IMR-90 (cell line): ENCODE measurements at regions of chr16 and their contacts with region 1.

Region 1: DNA sequence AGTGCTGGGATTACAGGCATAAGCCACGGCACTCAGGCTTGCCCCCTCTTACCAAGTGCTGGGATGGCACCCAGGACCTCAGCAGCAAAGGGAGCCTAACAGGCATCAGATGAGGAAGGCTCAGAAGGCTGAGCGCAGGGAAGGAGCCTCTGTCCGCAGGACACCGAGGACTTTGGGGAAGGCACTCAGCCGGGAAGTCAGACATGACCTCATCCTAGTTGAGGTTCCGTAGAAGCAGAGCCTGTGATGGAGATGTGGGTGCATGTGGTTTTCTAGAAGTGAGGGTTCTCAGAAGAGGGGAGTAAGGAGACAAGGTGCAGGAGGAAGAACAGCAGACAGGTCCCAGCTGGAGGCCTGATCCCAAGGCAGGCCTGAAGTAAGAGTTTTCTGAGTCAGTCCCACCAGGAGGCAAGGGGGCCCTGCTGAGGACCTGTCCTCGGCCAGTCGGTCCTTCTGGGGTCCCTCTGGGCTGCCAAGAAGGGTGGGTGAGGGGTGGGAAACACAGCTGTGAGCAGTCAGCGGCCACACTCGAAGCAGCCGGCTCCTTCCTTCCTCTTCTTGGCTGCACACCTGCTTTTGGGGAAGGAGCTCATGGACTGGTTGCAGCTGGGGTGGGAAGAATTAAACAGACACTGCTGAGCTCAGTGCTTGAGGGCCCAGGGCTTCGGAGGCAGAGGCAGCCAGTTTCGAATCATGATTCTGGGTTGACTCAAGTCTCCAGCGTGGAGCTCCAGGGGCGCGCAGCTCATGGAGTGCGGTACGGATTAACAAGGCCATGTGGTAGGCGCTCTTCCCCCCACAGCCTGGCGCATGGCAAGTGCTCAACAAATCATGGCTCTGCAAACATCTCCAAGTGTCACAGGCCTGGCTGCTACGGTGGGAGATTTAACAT is 38.9 kb upstream of the SNN start:
- DNase-seq: peak; percentile 41
- ATAC-seq: no peak
- H3K4me3 ChIP-seq: no peak overlapping the region
- H3K27ac ChIP-seq: peak overlapping the region; percentile 59; the same call in 1 of the 2 replicates
- H3K4me1 ChIP-seq: peaks cover 34% of the 10 kb centered on the region
- H3K27me3 ChIP-seq: no peaks in the 10 kb centered on the region
- CTCF ChIP-seq: no peak
- POLR2A ChIP-seq: no peak
- RAD21 ChIP-seq: no peak

Region 2: DNA sequence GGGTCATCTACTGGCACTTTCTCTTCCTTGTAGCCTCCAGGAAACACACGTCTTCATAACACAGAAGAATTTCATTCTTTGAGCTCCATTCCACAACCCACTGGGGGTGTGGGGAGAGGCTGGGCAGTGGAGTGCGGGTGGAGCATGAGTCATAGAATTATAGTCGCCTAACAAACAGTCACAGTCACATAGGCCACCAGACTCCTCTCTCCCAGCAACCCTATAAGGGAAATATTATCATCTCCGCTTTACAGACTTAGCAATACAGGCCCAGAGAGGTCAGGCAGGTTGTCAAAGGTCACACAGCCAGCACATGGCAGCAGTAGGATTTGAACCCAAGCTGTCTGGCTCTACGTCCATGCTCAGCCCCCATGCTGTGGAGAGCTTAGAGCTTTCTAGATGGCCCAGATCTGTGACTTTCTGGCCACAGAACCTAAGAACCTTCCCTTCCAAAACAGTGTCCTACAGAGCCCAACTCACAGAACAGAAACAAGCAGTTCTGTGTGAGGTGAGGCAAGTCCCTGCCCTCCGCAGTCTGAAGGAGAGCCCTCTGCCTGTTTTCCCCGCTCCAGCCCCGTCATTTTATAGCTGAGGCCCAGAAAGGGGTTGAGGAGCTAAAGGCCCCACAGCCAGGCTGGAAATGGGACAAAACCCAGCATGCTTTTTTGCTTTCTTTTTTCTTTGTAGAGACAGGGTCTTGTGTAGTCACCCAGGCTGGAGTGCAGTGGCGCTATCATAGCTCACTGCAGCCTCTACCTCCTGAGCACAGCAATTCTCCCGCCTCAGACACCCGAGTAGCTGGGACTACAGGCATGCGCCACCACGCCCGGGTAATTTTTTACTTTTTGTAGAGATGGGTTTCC is 31.8 kb before region 1 on chr16:
- CTCF ChIA-PET with region 1: interaction called, 4 read pairs
- POLR2A ChIA-PET with region 1: no interaction called
- dilution Hi-C with region 1: no loop called
- in situ Hi-C with region 1: loop called (anchors 5 kb)
- intact Hi-C with region 1: no loop called
- DNase-seq: no peak
- ATAC-seq: peak; percentile 81
- H3K4me3 ChIP-seq: no peak overlapping the region
- H3K27ac ChIP-seq: peak overlapping the region; percentile 56
- H3K4me1 ChIP-seq: peaks cover 25% of the 10 kb centered on the region
- H3K27me3 ChIP-seq: no peaks in the 10 kb centered on the region
- CTCF ChIP-seq: no peak
- POLR2A ChIP-seq: no peak
- RAD21 ChIP-seq: no peak